CD8-positive, alpha-beta memory T cell (primary cell): ENCODE measurements at regions of chr1 and their contacts with region 1.

Region 1: DNA sequence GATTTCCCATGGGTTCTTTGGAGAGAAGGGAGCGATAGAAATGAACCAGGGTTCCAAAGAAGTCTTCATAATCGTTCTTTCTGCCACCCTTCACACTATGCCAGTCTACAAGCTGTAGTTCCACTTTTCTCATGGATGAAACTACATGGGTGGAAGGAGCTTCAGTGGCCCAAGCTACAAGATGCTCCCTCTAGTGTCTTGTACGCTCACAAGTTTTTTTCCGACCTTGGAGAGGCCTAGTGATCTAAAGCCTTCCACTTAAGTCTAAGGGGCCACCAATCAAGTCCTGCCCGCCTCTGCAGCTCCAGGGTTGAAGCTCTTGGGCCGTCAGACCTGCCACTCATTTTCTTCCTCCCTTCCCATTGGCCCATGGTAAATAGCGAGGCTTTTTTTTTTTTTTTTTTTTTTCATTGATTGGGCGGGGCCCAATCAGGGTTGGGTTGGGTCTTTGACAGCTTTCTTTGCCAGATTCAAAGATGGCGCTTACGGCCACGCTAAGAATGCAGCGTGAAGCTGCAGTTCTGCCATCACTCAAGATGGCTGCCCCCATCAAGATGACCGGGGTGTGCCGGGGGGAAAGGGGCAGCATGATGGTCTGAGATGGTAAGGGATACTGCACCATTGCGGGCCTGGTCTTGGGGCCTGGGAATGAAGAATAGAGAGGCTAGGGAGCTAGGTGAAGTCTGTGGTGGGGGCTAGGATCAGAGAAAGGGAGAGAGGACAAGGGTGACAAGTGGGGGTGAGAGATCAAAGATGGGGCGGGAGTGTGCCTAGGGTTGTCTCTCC is at the start of gene TOMM40L:
- DNase-seq: peak; percentile 80 to 96 (median 89)
- H3K4me3 ChIP-seq: peak within 1 kb of the TSS; percentile 88
- H3K4me3 Mint-ChIP-seq: peak within 1 kb of the TSS; percentile 84 to 99 (median 98)
- H3K27ac ChIP-seq: peak within 1 kb of the TSS; percentile 44
- H3K27ac Mint-ChIP-seq: peak within 1 kb of the TSS; percentile 65 to 99 (median 95)
- H3K4me1 ChIP-seq: peaks cover 26% of the 10 kb centered on the region
- H3K4me1 Mint-ChIP-seq: peaks cover 31 to 32% (median 31%) of the 10 kb centered on the region in 3 donors
- H3K27me3 ChIP-seq: no peaks in the 10 kb centered on the region
- H3K27me3 Mint-ChIP-seq: peaks cover 0 to 3% of the 10 kb centered on the region in 2 donors
- total RNA-seq, gene TOMM40L: 24.7 to 26.1 TPM

Region 2: DNA sequence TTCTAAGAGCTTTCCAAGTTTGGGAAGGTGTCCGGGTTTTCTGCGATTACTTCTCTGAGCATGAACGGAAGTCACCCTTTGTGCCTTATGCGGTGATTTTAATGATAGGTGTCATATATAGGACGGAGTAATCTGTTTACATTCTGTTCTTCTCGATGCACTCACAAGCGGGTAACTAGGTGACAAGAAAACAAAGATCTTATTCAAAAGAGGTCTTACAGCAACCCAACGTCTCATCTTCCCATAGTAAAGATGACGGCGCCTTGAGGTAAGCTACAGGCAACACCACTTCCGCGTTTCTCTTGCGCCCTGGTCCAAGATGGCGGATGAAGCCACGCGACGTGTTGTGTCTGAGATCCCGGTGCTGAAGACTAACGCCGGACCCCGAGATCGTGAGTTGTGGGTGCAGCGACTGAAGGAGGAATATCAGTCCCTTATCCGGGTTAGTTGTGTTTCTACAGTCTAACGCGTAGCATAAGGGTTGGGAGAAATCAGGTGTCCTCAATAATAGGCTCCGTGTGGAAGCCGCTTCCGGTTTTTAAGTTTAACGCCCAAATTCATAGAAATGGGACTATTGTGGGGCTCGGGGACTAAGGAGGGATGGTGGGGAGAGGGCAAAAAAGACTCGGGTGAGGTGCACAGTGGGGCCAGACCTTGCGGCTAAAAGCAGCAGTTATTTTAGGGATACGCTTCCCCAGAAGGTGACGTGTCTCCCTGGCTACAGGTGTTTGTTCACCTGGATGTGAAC is 71.9 kb before region 1 on chr1 and contains the start of gene UFC1:
- CTCF ChIA-PET with region 1: interaction called, 15 read pairs
- POLR2A ChIA-PET with region 1: interaction called, 7 read pairs
- DNase-seq: peak; percentile 68 to 90 (median 88)
- H3K4me3 ChIP-seq: peak within 1 kb of the TSS; percentile 87
- H3K4me3 Mint-ChIP-seq: peak within 1 kb of the TSS; percentile 98 to 100 (median 98)
- H3K27ac ChIP-seq: peak within 1 kb of the TSS; percentile 98
- H3K27ac Mint-ChIP-seq: peak within 1 kb of the TSS; percentile 98 to 100 (median 100)
- H3K4me1 ChIP-seq: peaks cover 14% of the 10 kb centered on the region
- H3K4me1 Mint-ChIP-seq: peaks cover 25 to 45% (median 34%) of the 10 kb centered on the region in 3 donors
- H3K27me3 ChIP-seq: no peaks in the 10 kb centered on the region
- H3K27me3 Mint-ChIP-seq: no peaks in the 10 kb centered on the region
- total RNA-seq, gene UFC1: 109 to 118 TPM

Region 3: GRCh38 chr1:161185282-161185682 is 40.4 kb before region 1 on chr1:
- CTCF ChIA-PET with region 1: interaction called, 66 read pairs
- POLR2A ChIA-PET with region 1: interaction called, 14 read pairs
- DNase-seq: peak; percentile 64 to 90 (median 86)
- H3K4me3 ChIP-seq: peak overlapping the region; percentile 19
- H3K4me3 Mint-ChIP-seq: peak overlapping the region; percentile 82 to 94 (median 88)
- H3K27ac ChIP-seq: peak overlapping the region; percentile 28
- H3K27ac Mint-ChIP-seq: peak overlapping the region; percentile 58 to 98 (median 90)
- H3K4me1 ChIP-seq: peaks cover 85% of the 10 kb centered on the region
- H3K4me1 Mint-ChIP-seq: peaks cover 75 to 87% (median 86%) of the 10 kb centered on the region in 3 donors
- H3K27me3 ChIP-seq: no peaks in the 10 kb centered on the region
- H3K27me3 Mint-ChIP-seq: peaks cover 0 to 1% of the 10 kb centered on the region in 2 donors

Region 4: DNA sequence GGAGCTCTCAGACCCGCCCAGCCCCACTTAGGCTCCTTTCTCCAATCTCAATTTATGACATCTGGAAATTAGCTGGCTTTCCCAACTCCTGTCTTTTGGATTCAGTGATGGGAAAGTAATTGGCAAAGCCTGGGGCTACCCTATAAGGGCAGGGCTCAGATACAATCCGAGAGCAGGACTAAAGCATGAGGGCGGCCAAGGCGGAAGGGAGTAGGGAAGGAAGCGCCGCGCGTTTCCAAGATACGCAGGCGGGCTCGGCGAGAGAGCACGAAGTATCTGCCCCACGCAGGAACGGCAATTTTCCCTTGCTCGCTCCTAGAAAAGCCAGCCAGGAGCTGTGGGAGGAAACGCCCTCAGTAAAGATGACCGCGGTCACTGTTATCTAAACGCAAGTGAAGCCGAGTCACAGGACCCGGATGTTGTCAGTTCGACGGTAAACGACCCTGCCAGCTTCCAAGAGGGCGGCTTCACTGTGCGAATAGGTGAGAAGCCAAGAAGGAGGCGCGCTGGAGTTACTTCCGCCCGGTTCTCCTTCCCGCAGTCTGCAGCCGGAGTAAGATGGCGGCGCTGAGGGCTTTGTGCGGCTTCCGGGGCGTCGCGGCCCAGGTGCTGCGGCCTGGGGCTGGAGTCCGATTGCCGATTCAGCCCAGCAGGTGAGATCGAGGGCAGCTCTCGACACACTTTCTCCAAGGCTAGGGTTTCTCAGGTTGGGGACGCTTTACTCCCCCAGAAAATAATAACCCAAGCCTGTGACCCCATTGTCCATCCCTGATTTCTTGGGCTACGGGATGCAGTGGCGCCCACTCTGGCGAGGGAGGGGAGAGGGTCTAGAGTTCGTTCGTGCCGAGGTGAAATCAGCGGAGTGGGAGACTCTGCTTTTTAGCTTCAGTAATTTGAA is 23.6 kb before region 1 on chr1 and contains the start of gene NDUFS2:
- CTCF ChIA-PET with region 1: interaction called, 197 read pairs
- POLR2A ChIA-PET with region 1: interaction called, 51 read pairs
- DNase-seq: peak; percentile 92 to 98 (median 93)
- H3K4me3 ChIP-seq: peak within 1 kb of the TSS; percentile 99
- H3K4me3 Mint-ChIP-seq: peak within 1 kb of the TSS; percentile 93 to 97 (median 95)
- H3K27ac ChIP-seq: peak within 1 kb of the TSS; percentile 89
- H3K27ac Mint-ChIP-seq: peak within 1 kb of the TSS; percentile 96 to 99 (median 98)
- H3K4me1 ChIP-seq: peaks cover 59% of the 10 kb centered on the region
- H3K4me1 Mint-ChIP-seq: peaks cover 59 to 73% (median 71%) of the 10 kb centered on the region in 3 donors
- H3K27me3 ChIP-seq: no peaks in the 10 kb centered on the region
- H3K27me3 Mint-ChIP-seq: no peaks in the 10 kb centered on the region
- total RNA-seq, gene NDUFS2: 93.5 to 97.1 TPM

Region 5: DNA sequence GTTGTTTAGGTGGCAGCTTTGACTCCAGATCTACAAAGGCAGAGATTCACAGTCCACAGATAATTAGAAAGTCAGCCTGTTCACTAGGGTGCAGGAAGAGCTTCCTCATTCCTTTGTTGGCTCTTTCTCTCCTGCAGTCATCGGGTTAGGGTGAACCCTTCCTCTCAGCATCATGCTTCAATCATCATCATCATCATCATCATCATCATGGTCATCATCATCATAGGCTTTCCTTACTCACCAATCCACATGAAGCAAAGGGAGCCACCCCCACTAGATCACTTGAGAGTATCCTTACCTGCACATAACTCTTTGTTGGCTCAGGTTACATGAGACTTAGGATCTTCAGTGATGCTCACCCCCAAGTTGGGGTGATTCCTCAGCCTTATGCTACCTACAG is 65.1 kb after region 1 on chr1:
- CTCF ChIA-PET with region 1: interaction called, 21 read pairs
- POLR2A ChIA-PET with region 1: no interaction called
- DNase-seq: no peak
- H3K4me3 ChIP-seq: no peak overlapping the region
- H3K4me3 Mint-ChIP-seq: no peak overlapping the region
- H3K27ac ChIP-seq: no peak overlapping the region
- H3K27ac Mint-ChIP-seq: no peak overlapping the region
- H3K4me1 ChIP-seq: no peaks in the 10 kb centered on the region
- H3K4me1 Mint-ChIP-seq: peaks cover 0 to 4% (median 0%) of the 10 kb centered on the region in 3 donors
- H3K27me3 ChIP-seq: no peaks in the 10 kb centered on the region
- H3K27me3 Mint-ChIP-seq: peaks cover 0 to 4% of the 10 kb centered on the region in 2 donors

Region 6: GRCh38 chr1:161314201-161314981 is 88.7 kb after region 1 on chr1 and contains the start of gene SDHC:
- CTCF ChIA-PET with region 1: interaction called, 13 read pairs
- POLR2A ChIA-PET with region 1: interaction called, 8 read pairs
- DNase-seq: peak; percentile 86 to 94 (median 90)
- H3K4me3 ChIP-seq: peak within 1 kb of the TSS; percentile 99
- H3K4me3 Mint-ChIP-seq: peak within 1 kb of the TSS; percentile 98 to 99 (median 99)
- H3K27ac ChIP-seq: peak within 1 kb of the TSS; percentile 99
- H3K27ac Mint-ChIP-seq: peak within 1 kb of the TSS; percentile 98 to 100 (median 100)
- H3K4me1 ChIP-seq: peaks cover 16% of the 10 kb centered on the region
- H3K4me1 Mint-ChIP-seq: peaks cover 22 to 38% (median 30%) of the 10 kb centered on the region in 3 donors
- H3K27me3 ChIP-seq: no peaks in the 10 kb centered on the region
- H3K27me3 Mint-ChIP-seq: no peaks in the 10 kb centered on the region
- total RNA-seq, gene SDHC: 226 to 232 TPM

Region 7: DNA sequence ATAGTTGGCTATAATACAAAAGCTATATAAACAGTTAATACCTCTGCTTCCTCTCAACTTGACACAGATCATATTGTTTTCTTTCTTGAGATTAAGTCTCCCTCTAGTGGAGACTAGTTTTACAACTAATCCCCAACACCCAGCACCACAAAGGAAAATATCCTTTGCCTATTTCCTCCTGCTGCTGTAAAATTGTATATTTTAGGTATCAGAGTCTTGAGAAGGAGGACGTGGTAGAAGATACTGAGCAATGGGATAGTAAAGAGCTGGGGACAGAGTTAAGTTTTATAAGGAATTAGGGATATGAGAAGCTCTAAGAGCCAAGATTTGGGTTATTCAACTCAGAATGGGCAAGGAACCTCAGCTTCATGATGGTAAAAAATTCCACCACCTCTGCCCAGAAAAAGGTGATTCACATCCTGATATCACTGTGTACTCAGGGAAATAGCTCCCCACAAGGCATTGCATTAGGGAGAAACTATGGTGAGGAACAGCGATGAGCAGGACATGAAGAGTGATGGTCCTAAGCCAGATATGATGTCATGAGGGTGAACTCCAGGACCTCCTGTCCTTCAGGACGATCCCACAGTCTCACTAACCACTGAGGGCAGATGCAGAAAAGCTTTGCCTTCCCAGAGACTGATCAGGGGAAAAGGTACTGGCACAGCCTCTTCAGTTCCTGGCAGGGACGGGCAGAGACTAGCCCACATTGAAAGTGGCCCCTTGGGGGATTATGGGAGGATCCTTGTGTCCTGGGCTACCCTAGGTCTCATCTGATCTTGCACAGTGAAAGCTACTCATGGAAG is 156.7 kb after region 1 on chr1:
- CTCF ChIA-PET with region 1: interaction called, 98 read pairs
- POLR2A ChIA-PET with region 1: interaction called, 5 read pairs
- DNase-seq: peak in 2 of 5 donors; percentile 37 to 48
- H3K4me3 ChIP-seq: no peak overlapping the region
- H3K4me3 Mint-ChIP-seq: no peak overlapping the region
- H3K27ac ChIP-seq: no peak overlapping the region
- H3K27ac Mint-ChIP-seq: peak overlapping the region in 2 of 8 donors; percentile 0 to 62
- H3K4me1 ChIP-seq: no peaks in the 10 kb centered on the region
- H3K4me1 Mint-ChIP-seq: peaks cover 4 to 12% (median 8%) of the 10 kb centered on the region in 3 donors
- H3K27me3 ChIP-seq: no peaks in the 10 kb centered on the region
- H3K27me3 Mint-ChIP-seq: peaks cover 0 to 2% of the 10 kb centered on the region in 2 donors